Naive thymus-derived CD4-positive, alpha-beta T cell (primary cell): ENCODE measurements at regions of chr16 and their contacts with region 1.

Region 1: DNA sequence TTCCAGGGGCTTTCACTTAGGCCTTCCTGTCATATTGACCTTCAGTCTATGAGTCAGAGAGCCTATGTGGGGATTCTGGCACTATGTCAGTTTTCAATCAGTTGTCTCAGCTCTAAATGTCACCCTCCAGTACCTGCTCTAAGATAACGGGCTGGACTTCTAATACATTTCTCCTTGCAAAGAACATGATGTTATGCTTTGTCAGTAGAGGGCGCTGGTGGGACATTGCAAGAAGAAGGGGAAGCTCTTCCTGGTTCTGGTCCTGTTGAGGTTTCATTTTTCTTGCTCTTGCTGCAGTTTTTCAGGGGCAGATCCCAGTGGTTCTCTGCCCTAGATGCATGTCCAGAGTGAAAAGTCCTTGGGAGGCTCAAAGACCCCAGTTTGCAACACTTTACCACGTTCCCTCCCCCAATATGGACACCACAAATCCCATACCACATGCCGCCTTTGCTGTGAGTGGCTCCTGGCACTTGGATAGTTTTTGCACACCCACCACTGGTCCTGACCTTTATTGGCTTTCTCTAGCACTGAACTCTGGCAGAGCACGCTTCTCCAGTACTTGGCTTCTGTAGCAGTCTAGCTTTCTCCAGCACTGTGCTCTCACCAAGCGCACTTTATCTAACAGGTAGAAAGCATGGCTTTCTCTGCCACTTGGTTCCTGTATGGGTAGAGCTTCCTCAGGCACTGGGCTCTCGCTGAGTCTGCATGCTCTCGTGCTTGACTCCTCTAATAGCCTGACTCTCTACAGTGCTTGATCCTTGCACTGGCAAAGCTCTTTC is 49.0 kb downstream of the BCL7C start:
- DNase-seq: peak; percentile 50 to 89 (median 83)
- ATAC-seq: peak; percentile 97
- H3K4me3 ChIP-seq: no peak overlapping the region
- H3K4me3 Mint-ChIP-seq: peak overlapping the region in 9 of 10 donors; percentile 22 to 67 (median 64)
- H3K27ac ChIP-seq: peak overlapping the region; percentile 1
- H3K27ac Mint-ChIP-seq: peak overlapping the region; percentile 2 to 82 (median 73)
- H3K4me1 ChIP-seq: peaks cover 0 to 5% of the 10 kb centered on the region in 2 donors
- H3K4me1 Mint-ChIP-seq: peaks cover 6 to 14% (median 8%) of the 10 kb centered on the region in 7 donors
- H3K27me3 ChIP-seq: no peaks in the 10 kb centered on the region
- H3K27me3 Mint-ChIP-seq: no peaks in the 10 kb centered on the region

Region 2: DNA sequence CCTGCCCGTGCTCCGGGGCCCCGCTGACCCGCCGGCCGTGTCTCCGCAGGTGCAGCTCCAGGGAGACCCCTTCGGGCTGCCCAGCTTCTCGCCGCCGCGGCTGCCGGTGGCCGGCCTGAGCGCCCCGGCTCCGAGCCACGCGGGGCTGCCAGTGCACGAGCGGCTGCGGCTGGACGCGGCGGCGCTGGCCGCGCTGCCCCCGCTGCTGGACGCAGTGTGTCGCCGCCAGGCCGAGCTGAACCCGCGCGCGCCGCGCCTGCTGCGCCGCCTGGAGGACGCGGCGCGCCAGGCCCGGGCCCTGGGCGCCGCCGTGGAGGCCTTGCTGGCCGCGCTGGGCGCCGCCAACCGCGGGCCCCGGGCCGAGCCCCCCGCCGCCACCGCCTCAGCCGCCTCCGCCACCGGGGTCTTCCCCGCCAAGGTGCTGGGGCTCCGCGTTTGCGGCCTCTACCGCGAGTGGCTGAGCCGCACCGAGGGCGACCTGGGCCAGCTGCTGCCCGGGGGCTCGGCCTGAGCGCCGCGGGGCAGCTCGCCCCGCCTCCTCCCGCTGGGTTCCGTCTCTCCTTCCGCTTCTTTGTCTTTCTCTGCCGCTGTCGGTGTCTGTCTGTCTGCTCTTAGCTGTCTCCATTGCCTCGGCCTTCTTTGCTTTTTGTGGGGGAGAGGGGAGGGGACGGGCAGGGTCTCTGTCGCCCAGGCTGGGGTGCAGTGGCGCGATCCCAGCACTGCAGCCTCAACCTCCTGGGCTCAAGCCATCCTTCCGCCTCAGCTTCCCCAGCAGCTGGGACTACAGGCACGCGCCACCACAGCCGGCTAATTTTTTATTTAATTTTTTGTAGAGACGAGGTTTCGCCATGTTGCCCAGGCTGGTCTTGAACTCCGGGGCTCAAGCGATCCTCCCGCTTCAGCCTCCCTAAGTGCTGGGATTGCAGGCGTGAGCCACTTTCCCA is 57.4 kb after region 1 on chr16:
- CTCF ChIA-PET with region 1: interaction called, 54 read pairs
- POLR2A ChIA-PET with region 1: interaction called, 25 read pairs
- intact Hi-C with region 1: loop called (anchors 1 kb)
- DNase-seq: peak in 8 of 9 donors; percentile 38 to 76 (median 61)
- ATAC-seq: peak; percentile 92
- H3K4me3 ChIP-seq: peak overlapping the region; percentile 65
- H3K4me3 Mint-ChIP-seq: peak overlapping the region; percentile 91 to 99 (median 96)
- H3K27ac ChIP-seq: peak overlapping the region; percentile 80
- H3K27ac Mint-ChIP-seq: peak overlapping the region; percentile 90 to 99 (median 98)
- H3K4me1 ChIP-seq: peaks cover 26 to 35% of the 10 kb centered on the region in 2 donors
- H3K4me1 Mint-ChIP-seq: peaks cover 18 to 43% (median 32%) of the 10 kb centered on the region in 7 donors
- H3K27me3 ChIP-seq: no peaks in the 10 kb centered on the region
- H3K27me3 Mint-ChIP-seq: no peaks in the 10 kb centered on the region

Region 3: GRCh38 chr16:30941600-30942425 is 97.0 kb after region 1 on chr16:
- CTCF ChIA-PET with region 1: interaction called, 20 read pairs
- POLR2A ChIA-PET with region 1: interaction called, 6 read pairs
- intact Hi-C with region 1: loop called (anchors 1 kb)
- DNase-seq: peak; percentile 33 to 76 (median 44)
- ATAC-seq: peak; percentile 99
- H3K4me3 ChIP-seq: no peak overlapping the region
- H3K4me3 Mint-ChIP-seq: peak overlapping the region in 2 of 10 donors; percentile 32 to 69
- H3K27ac ChIP-seq: no peak overlapping the region
- H3K27ac Mint-ChIP-seq: peak overlapping the region in 5 of 9 donors; percentile 15 to 59 (median 55)
- H3K4me1 ChIP-seq: peaks cover 5 to 8% of the 10 kb centered on the region in 2 donors
- H3K4me1 Mint-ChIP-seq: peaks cover 5 to 32% (median 13%) of the 10 kb centered on the region in 7 donors
- H3K27me3 ChIP-seq: no peaks in the 10 kb centered on the region
- H3K27me3 Mint-ChIP-seq: no peaks in the 10 kb centered on the region

Region 4: GRCh38 chr16:31044190-31044481 is 199.3 kb after region 1 on chr16:
- CTCF ChIA-PET with region 1: no interaction called
- POLR2A ChIA-PET with region 1: no interaction called
- intact Hi-C with region 1: no loop called
- DNase-seq: no peak
- ATAC-seq: no peak
- H3K4me3 ChIP-seq: no peak overlapping the region
- H3K4me3 Mint-ChIP-seq: no peak overlapping the region
- H3K27ac ChIP-seq: no peak overlapping the region
- H3K27ac Mint-ChIP-seq: no peak overlapping the region
- H3K4me1 ChIP-seq: no peaks in the 10 kb centered on the region
- H3K4me1 Mint-ChIP-seq: peaks cover 0 to 3% (median 0%) of the 10 kb centered on the region in 7 donors
- H3K27me3 ChIP-seq: no peaks in the 10 kb centered on the region
- H3K27me3 Mint-ChIP-seq: no peaks in the 10 kb centered on the region